SK-N-SH (cell line): ENCODE measurements at regions of chr7 and their contacts with region 1.

Region 1: DNA sequence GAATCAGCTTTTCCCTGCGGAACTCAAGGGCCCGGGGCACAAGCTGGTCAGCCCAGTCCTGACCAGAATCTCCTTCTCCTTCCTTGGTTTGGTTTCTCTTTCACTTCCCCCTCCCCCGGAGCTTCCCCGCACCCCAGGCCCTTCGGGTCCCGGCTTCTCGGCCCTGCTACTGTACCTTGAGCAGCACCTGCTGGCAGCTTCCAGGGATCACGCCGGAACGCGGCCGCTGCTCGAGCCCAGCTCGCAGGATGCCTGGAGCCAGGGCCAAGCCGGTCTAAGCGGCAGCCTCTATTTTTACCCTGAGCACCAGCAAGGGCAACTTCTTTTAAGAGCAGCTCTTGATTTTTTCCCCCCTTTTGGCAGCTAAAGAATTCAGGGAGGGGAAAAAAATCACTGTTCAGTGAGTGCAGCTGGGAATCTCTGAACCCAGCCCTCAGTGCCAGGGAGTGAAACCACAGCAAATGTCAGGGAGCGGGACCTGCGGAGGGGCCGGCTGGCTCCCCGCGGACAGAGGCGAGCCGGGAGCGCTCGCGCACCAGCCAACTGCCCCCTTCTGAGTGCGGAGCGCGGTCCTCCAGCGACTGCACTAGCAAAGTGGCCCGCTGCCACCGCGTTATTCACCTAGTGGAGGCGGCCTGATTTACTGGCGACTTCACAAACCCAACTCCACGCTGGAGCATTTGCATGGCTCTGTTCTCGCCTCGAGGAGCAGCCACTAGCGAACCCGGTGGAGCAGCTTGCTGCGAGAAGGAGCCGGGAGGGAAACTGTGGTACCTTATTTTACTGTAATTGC is 2.4 kb upstream of the INHBA start:
- DNase-seq: peak; percentile 96
- H3K4me3 ChIP-seq: peak overlapping the region; percentile 55 to 73
- H3K27ac ChIP-seq: peak overlapping the region; percentile 92 to 93
- H3K4me1 ChIP-seq: peaks cover 23 to 24% of the 10 kb centered on the region in 2 experiments
- H3K27me3 ChIP-seq: no peaks in the 10 kb centered on the region
- CTCF ChIP-seq: peak; percentile 98
- EP300 ChIP-seq: peak in 1 of 2 experiments; percentile 48; a peak in 1 of 4 replicates
- RAD21 ChIP-seq: peak; percentile 92

Region 2: DNA sequence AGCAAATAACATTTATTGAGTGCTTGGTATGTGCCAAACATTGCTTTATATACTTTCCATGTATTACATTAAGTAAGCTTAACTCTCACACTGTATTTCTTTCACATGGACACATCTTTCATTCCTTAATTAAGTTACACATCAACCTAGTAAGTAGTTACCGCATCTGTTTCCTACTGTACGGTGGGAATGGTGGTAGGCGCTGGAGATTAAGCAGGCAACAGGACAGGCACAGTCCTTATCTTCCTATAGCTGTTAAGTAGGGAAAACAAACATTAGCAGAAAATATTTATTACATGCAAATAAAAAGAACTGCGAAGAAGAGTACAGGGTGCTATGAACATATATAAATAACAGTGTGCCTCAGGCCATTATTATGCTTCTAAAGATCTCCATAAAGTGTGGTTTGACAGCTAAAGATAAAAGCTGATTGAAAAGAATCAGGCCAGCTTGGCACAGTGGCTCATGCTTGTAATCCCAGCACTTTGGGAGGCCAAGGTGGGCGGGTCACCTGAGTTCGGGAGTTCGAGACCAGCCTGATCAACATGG is 1465.5 kb before region 1 on chr7:
- CTCF ChIA-PET with region 1: interaction called, 86 read pairs
- POLR2A ChIA-PET with region 1: no interaction called
- DNase-seq: peak; percentile 58
- H3K4me3 ChIP-seq: no peak overlapping the region
- H3K27ac ChIP-seq: no peak overlapping the region
- H3K4me1 ChIP-seq: peaks cover 0 to 5% of the 10 kb centered on the region in 2 experiments; a peak in 1 of 4 replicates
- H3K27me3 ChIP-seq: no peaks in the 10 kb centered on the region
- CTCF ChIP-seq: no peak
- EP300 ChIP-seq: peak in 1 of 2 experiments; percentile 62; a peak in 2 of 4 replicates
- RAD21 ChIP-seq: no peak

Region 3: GRCh38 chr7:40604601-40605438 is 1100.5 kb before region 1 on chr7:
- CTCF ChIA-PET with region 1: interaction called, 15 read pairs
- POLR2A ChIA-PET with region 1: no interaction called
- DNase-seq: peak; percentile 61
- H3K4me3 ChIP-seq: peak overlapping the region in 1 of 2 experiments; percentile 1; a peak in 1 of 4 replicates
- H3K27ac ChIP-seq: no peak overlapping the region
- H3K4me1 ChIP-seq: peaks cover 0 to 12% of the 10 kb centered on the region in 2 experiments; a peak in 2 of 4 replicates
- H3K27me3 ChIP-seq: no peaks in the 10 kb centered on the region
- CTCF ChIP-seq: peak; percentile 60
- EP300 ChIP-seq: no peak
- RAD21 ChIP-seq: peak; percentile 79

Region 4: DNA sequence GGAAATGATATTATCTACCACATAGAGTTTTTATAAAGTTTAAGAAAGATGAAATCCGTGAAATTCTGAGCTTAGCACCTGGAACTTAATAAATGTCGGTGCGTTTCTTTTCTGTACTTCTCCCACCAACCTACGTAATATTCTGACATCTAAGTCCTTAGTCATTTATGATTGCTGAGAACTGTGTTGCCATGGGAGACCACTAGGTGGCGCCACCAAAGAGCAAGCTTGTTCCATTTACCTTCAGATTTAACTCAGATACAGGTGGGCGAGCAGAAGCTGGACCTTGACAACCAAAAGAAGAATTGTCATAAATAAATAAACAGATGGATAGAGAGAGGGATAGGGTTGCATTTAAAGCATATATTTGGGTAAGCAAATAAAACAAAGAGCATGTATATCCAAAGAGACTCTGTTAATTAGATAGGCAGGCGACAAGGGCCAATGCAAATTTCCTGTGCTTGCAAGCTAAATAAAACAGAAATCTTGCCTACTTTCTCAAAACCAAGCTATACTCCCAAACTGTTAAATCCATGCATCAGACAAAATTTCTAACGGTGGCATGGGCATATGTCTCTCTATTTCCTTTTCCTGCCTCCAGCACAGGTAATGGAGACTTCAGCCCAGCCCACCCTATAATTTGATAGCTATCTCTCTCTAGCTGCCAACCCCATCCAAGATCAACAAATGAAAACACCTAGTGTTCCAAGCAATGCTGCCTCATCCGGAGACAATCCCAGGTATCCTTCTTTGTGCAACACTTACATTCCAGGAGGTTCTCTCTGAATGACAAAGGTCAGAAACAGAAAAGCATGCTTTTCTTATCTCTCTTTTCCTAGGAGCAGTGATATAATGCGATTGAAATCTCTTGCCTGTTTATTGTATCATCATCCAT is 702.0 kb before region 1 on chr7:
- CTCF ChIA-PET with region 1: interaction called, 19 read pairs
- POLR2A ChIA-PET with region 1: no interaction called
- DNase-seq: peak; percentile 27
- H3K4me3 ChIP-seq: peak overlapping the region in 1 of 2 experiments; percentile 30; a peak in 1 of 4 replicates
- H3K27ac ChIP-seq: no peak overlapping the region
- H3K4me1 ChIP-seq: peaks cover 0 to 6% of the 10 kb centered on the region in 2 experiments; a peak in 1 of 4 replicates
- H3K27me3 ChIP-seq: no peaks in the 10 kb centered on the region
- CTCF ChIP-seq: peak; percentile 91
- EP300 ChIP-seq: no peak
- RAD21 ChIP-seq: peak; percentile 70

Region 5: DNA sequence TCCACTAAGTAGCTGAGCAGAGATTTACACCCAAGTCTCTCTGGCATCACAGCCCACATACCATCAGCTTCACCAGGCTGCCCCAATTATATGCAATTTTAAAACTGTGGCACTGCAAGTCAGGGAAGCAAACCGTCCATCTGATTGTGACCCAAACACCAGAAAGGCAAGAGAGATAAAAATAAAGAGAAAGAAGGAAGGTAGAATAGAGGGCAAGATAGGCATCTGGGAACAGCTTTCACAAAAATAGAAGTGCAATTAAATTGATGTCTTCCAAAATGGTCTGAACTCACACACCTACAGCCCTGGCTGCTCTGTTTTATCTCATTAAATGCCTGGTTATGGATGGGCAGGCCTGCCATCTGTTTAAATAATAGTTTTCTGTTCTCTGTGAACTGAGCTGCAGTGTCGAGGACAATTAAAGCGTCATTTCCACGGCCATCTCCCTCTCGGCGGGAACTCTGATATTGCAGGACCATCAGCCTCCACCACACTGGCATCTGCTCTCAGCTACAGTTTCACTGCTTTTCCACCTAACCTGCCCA is 511.5 kb before region 1 on chr7:
- CTCF ChIA-PET with region 1: interaction called, 11 read pairs
- POLR2A ChIA-PET with region 1: no interaction called
- DNase-seq: peak; percentile 72
- H3K4me3 ChIP-seq: no peak overlapping the region
- H3K27ac ChIP-seq: peak overlapping the region in 1 of 2 experiments; percentile 56; a peak in 2 of 4 replicates
- H3K4me1 ChIP-seq: peaks cover 22 to 23% of the 10 kb centered on the region in 2 experiments; a peak in 3 of 4 replicates
- H3K27me3 ChIP-seq: no peaks in the 10 kb centered on the region
- CTCF ChIP-seq: no peak
- EP300 ChIP-seq: peak in 1 of 2 experiments; percentile 89; a peak in 2 of 4 replicates
- RAD21 ChIP-seq: peak; percentile 19; the same call in 1 of the 2 replicates

Region 6: DNA sequence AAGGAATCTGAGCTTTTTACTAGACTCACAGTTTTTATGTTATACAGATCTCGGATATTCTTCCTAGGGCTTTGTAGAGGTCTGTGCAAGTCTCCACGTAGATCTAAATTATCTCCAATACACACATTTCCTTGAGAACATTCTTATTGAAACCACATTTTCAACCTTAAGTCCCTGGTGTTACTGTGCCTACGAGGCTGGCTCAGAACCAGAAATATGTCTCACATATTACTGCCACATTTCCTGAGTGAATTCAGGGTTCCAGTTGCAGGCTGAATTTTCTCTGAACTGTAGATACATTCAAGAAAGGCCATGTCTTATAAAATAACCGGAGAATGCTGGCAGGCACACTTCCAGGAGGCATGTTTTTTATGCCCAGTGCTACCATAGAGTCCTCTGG is 48.9 kb before region 1 on chr7:
- CTCF ChIA-PET with region 1: interaction called, 12 read pairs
- POLR2A ChIA-PET with region 1: no interaction called
- DNase-seq: peak; percentile 8
- H3K4me3 ChIP-seq: no peak overlapping the region
- H3K27ac ChIP-seq: peak overlapping the region; percentile 49 to 69
- H3K4me1 ChIP-seq: peaks cover 4 to 8% of the 10 kb centered on the region in 2 experiments; a peak in 2 of 4 replicates
- H3K27me3 ChIP-seq: no peaks in the 10 kb centered on the region
- CTCF ChIP-seq: no peak
- EP300 ChIP-seq: no peak
- RAD21 ChIP-seq: no peak

Region 7: GRCh38 chr7:41716691-41717090 is 11.4 kb after region 1 on chr7:
- CTCF ChIA-PET with region 1: interaction called, 38 read pairs
- POLR2A ChIA-PET with region 1: no interaction called
- DNase-seq: no peak
- H3K4me3 ChIP-seq: no peak overlapping the region
- H3K27ac ChIP-seq: no peak overlapping the region
- H3K4me1 ChIP-seq: no peaks in the 10 kb centered on the region; a peak in 1 of 4 replicates
- H3K27me3 ChIP-seq: no peaks in the 10 kb centered on the region
- CTCF ChIP-seq: no peak
- EP300 ChIP-seq: no peak
- RAD21 ChIP-seq: no peak

Region 8: GRCh38 chr7:41796331-41796730 is 91.0 kb after region 1 on chr7:
- CTCF ChIA-PET with region 1: no interaction called
- POLR2A ChIA-PET with region 1: no interaction called
- DNase-seq: no peak
- H3K4me3 ChIP-seq: no peak overlapping the region
- H3K27ac ChIP-seq: no peak overlapping the region
- H3K4me1 ChIP-seq: peaks cover 0 to 14% of the 10 kb centered on the region in 2 experiments; a peak in 1 of 4 replicates
- H3K27me3 ChIP-seq: no peaks in the 10 kb centered on the region
- CTCF ChIP-seq: no peak
- EP300 ChIP-seq: no peak
- RAD21 ChIP-seq: no peak

Region 9: GRCh38 chr7:42070043-42070675 is 364.9 kb after region 1 on chr7:
- CTCF ChIA-PET with region 1: no interaction called
- POLR2A ChIA-PET with region 1: no interaction called
- DNase-seq: no peak
- H3K4me3 ChIP-seq: no peak overlapping the region
- H3K27ac ChIP-seq: no peak overlapping the region
- H3K4me1 ChIP-seq: no peaks in the 10 kb centered on the region
- H3K27me3 ChIP-seq: peaks cover 44% of the 10 kb centered on the region; the same call in 1 of the 2 replicates
- CTCF ChIP-seq: no peak
- EP300 ChIP-seq: no peak
- RAD21 ChIP-seq: no peak